Caco-2 (cell line): ENCODE measurements at regions of chr15 and their contacts with region 1.

Region 1: DNA sequence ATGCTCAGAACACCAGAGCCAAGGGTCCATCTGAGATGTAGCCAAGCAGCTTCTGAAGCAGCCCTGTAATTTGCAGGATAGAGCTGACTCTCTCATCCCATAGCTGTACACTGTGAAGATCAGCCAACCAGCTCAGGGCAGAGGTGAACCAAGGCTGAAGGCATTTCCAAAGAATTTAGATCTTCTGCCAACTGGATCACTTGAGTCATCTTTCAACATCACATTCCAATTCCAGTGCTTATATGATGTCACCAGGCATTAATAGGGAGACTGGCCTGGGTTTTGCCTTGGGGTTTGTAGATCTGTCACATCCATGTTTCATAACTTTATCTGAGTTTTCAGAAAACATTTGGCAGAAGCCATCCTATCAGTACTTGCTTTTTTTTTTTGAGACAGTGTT is 98.2 kb downstream of the NR2F2 start:
- DNase-seq: no peak
- H3K4me3 ChIP-seq: no peak overlapping the region
- H3K4me3 Mint-ChIP-seq: no peak overlapping the region
- H3K27ac Mint-ChIP-seq: no peak overlapping the region
- H3K4me1 ChIP-seq: no peaks in the 10 kb centered on the region
- H3K4me1 Mint-ChIP-seq: no peaks in the 10 kb centered on the region
- H3K27me3 ChIP-seq: no peaks in the 10 kb centered on the region
- H3K27me3 Mint-ChIP-seq: peaks cover 4% of the 10 kb centered on the region
- CTCF ChIP-seq: no peak

Region 2: DNA sequence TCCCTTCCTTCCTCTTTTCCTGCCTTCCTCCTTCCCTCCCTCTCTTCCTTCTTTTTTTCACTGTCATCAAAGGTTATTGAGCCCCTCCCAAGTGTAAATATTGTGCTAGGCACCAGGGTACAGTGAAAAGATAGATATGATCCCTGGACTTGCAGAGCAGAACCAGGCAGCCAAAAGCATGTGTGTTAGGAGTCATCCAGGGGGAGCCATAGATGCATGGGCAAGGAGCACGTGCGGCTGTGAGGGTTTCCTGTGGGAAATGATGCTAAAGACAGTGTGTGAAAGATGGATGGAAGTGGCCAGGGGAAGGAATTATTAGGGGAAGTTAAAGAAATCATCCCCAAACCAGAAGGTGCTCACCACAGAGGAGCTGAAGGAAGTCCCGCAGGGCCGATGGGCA is 33.0 kb before region 1 on chr15:
- CTCF ChIA-PET with region 1: no interaction called
- POLR2A ChIA-PET with region 1: no interaction called
- intact Hi-C with region 1: loop called (anchors 1 kb)
- DNase-seq: no peak
- H3K4me3 ChIP-seq: no peak overlapping the region
- H3K4me3 Mint-ChIP-seq: no peak overlapping the region
- H3K27ac Mint-ChIP-seq: no peak overlapping the region
- H3K4me1 ChIP-seq: no peaks in the 10 kb centered on the region
- H3K4me1 Mint-ChIP-seq: peaks cover 6% of the 10 kb centered on the region
- H3K27me3 ChIP-seq: no peaks in the 10 kb centered on the region
- H3K27me3 Mint-ChIP-seq: no peaks in the 10 kb centered on the region
- CTCF ChIP-seq: peak in 1 of 2 experiments; percentile 6